Activated CD8-positive, alpha-beta memory T cell treated with anti-CD3 and anti-CD28 coated beads, Interleukin-2, amount 10 ng/mL, durations not matched to agents 7 days and 5 days (primary cell): ENCODE measurements at regions of chr2 and their contacts with region 1.

Region 1: GRCh38 chr2:127049927-127050802 is 56.8 kb downstream of the BIN1 start:
- DNase-seq: peak; percentile 68
- ATAC-seq: peak; percentile 71
- H3K4me3 Mint-ChIP-seq: no peak overlapping the region
- H3K27ac Mint-ChIP-seq: peak overlapping the region; percentile 43
- H3K4me1 Mint-ChIP-seq: peaks cover 2% of the 10 kb centered on the region
- H3K27me3 Mint-ChIP-seq: no peaks in the 10 kb centered on the region

Region 2: DNA sequence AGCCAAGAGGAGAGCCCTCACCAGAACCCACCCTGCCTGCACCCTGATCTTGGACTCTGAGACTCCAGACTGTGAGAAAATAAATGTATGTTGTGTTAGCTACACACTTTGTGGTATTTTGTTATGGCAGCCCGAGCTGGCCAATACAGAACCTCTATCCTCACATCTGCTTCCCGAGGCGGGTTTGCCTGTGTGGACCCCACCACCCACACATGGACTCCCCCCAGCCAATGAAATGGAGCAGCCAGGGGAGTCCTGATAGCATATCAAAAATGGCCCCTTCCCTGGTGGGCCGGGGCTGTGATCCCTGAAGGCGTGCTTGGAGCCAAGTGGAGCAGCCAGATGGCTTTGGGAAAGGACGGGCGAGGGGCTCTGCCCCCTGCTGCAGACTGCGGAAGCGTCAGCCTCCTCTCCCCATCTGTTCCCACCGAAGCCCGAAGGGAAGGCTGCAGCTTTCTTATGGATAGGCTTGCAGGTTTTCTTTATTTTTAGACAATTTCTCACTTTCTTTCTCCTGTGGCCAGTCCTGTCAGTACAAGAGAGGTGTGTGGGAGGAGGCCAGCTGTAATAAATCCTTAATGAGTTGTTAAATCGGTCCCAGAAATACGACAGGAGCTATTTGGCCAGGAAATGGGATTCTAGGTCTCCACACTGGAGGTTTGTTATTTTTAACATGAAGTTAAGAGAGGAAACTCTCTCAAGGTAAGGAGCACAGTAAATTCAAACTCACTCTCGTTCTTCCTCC is 117.0 kb before region 1 on chr2:
- CTCF ChIA-PET with region 1: no interaction called
- DNase-seq: no peak
- ATAC-seq: no peak
- H3K4me3 Mint-ChIP-seq: no peak overlapping the region
- H3K27ac Mint-ChIP-seq: no peak overlapping the region
- H3K4me1 Mint-ChIP-seq: no peaks in the 10 kb centered on the region
- H3K27me3 Mint-ChIP-seq: peaks cover 27% of the 10 kb centered on the region

Region 3: GRCh38 chr2:126971481-126972278 is 78.5 kb before region 1 on chr2:
- CTCF ChIA-PET with region 1: interaction called, 21 read pairs
- DNase-seq: peak; percentile 69
- ATAC-seq: peak; percentile 86
- H3K4me3 Mint-ChIP-seq: no peak overlapping the region
- H3K27ac Mint-ChIP-seq: no peak overlapping the region
- H3K4me1 Mint-ChIP-seq: peaks cover 2% of the 10 kb centered on the region
- H3K27me3 Mint-ChIP-seq: peaks cover 58% of the 10 kb centered on the region

Region 4: GRCh38 chr2:127039387-127040031 is 10.7 kb before region 1 on chr2:
- CTCF ChIA-PET with region 1: interaction called, 15 read pairs
- DNase-seq: no peak
- ATAC-seq: peak; percentile 71
- H3K4me3 Mint-ChIP-seq: no peak overlapping the region
- H3K27ac Mint-ChIP-seq: no peak overlapping the region
- H3K4me1 Mint-ChIP-seq: peaks cover 17% of the 10 kb centered on the region
- H3K27me3 Mint-ChIP-seq: peaks cover 6% of the 10 kb centered on the region